ENCODE measurements at regions of chr1 and their contacts with region 1.

Region 1: GRCh38 chr1:7207875-7208646 is 422.8 kb downstream of the CAMTA1 start:
- DNase-seq: peak; percentile 65
- ATAC-seq: peak; percentile 100
- H3K4me3 ChIP-seq: no peak overlapping the region
- H3K27ac ChIP-seq: no peak overlapping the region
- H3K4me1 ChIP-seq: peaks cover 0 to 3% of the 10 kb centered on the region in 2 experiments; a peak in 1 of 4 replicates
- H3K27me3 ChIP-seq: no peaks in the 10 kb centered on the region
- CTCF ChIP-seq: peak; percentile 89 to 94 (median 92)
- POLR2A ChIP-seq: no peak
- RAD21 ChIP-seq: peak; percentile 93

Region 2: GRCh38 chr1:6701437-6702153 is 506.5 kb before region 1 on chr1 and contains the start of gene DNAJC11:
- CTCF ChIA-PET with region 1: interaction called, 3 read pairs
- POLR2A ChIA-PET with region 1: no interaction called
- RAD21 ChIA-PET with region 1: no interaction called
- intact Hi-C with region 1: loop called (anchors 5 kb)
- DNase-seq: peak; percentile 74
- ATAC-seq: peak; percentile 93
- H3K4me3 ChIP-seq: peak within 1 kb of the TSS; percentile 99 to 100
- H3K27ac ChIP-seq: peak within 1 kb of the TSS; percentile 77
- H3K4me1 ChIP-seq: peaks cover 5 to 20% of the 10 kb centered on the region in 2 experiments; a peak in 3 of 4 replicates
- H3K27me3 ChIP-seq: no peaks in the 10 kb centered on the region
- CTCF ChIP-seq: peak; percentile 62 to 78 (median 77)
- POLR2A ChIP-seq: peak; percentile 73
- RAD21 ChIP-seq: no peak
- total RNA-seq, gene DNAJC11: 75.6 TPM

Region 3: GRCh38 chr1:6962996-6963911 is 244.8 kb before region 1 on chr1:
- CTCF ChIA-PET with region 1: interaction called, 13 read pairs
- POLR2A ChIA-PET with region 1: no interaction called
- RAD21 ChIA-PET with region 1: no interaction called
- intact Hi-C with region 1: no loop called
- DNase-seq: peak; percentile 88
- ATAC-seq: peak; percentile 82
- H3K4me3 ChIP-seq: peak overlapping the region; percentile 21 to 25; a peak in 3 of 4 replicates
- H3K27ac ChIP-seq: peak overlapping the region; percentile 39; the same call in 1 of the 2 replicates
- H3K4me1 ChIP-seq: peaks cover 27 to 40% of the 10 kb centered on the region in 2 experiments
- H3K27me3 ChIP-seq: no peaks in the 10 kb centered on the region
- CTCF ChIP-seq: no peak
- POLR2A ChIP-seq: no peak
- RAD21 ChIP-seq: no peak; the same call in none of the 2 replicates

Region 4: DNA sequence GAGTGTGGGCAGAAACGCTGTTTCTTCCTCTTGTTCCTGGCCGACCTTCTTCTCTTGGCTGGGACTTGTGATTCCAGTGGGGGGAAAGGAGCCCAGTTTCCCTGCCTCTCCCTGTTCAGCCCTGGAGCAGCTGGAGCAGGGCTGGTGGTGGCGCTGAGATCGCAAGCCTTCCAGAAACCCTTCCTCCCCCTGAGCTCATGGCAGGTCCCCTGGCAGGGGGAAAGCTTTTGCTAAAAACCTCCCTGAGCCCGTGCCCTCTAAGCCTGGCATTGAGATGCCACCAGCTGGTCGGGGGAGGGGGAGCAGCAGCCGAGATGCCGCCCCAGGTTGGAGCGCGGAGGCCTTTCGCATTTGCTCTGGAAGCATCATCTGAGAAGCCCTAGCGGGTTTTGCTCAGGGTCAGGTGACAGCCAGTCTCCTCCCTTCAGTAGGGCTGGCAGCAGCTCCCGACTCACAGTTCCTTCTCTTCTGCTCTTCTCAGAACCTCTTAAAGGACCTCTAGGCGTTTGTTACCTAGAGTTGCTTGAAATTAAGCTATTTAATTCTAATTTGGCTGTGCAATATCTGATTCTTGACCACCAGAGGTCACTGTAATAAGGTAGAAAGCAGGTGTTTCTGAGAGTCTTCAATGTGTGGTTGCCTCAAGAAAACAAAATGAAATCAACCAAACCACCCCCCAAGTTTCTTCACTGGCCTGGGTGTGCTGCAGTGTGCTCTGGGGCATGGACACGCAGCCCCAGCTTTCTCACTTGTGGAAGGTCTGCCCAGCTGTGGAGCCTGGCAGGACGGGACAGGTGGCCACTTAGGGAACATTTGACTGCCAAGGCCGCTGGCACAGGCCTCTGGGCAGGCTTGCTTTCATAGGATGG is 165.5 kb before region 1 on chr1:
- CTCF ChIA-PET with region 1: interaction called, 76 read pairs
- POLR2A ChIA-PET with region 1: no interaction called
- RAD21 ChIA-PET with region 1: interaction called, 5 to 9 read pairs
- intact Hi-C with region 1: loop called (anchors 1 kb)
- DNase-seq: peak; percentile 10
- ATAC-seq: peak; percentile 87
- H3K4me3 ChIP-seq: no peak overlapping the region
- H3K27ac ChIP-seq: no peak overlapping the region
- H3K4me1 ChIP-seq: no peaks in the 10 kb centered on the region
- H3K27me3 ChIP-seq: peaks cover 11% of the 10 kb centered on the region
- CTCF ChIP-seq: peak; percentile 49 to 74 (median 69)
- POLR2A ChIP-seq: no peak
- RAD21 ChIP-seq: peak; percentile 75

Region 5: GRCh38 chr1:7218210-7218832 is 10.3 kb after region 1 on chr1:
- CTCF ChIA-PET with region 1: interaction called, 11 read pairs
- POLR2A ChIA-PET with region 1: no interaction called
- RAD21 ChIA-PET with region 1: no interaction called
- intact Hi-C with region 1: no loop called
- DNase-seq: peak; percentile 51
- ATAC-seq: peak; percentile 74
- H3K4me3 ChIP-seq: no peak overlapping the region
- H3K27ac ChIP-seq: no peak overlapping the region
- H3K4me1 ChIP-seq: peaks cover 3 to 7% of the 10 kb centered on the region in 2 experiments; a peak in 2 of 4 replicates
- H3K27me3 ChIP-seq: no peaks in the 10 kb centered on the region
- CTCF ChIP-seq: peak; percentile 83 to 95 (median 90)
- POLR2A ChIP-seq: no peak
- RAD21 ChIP-seq: peak; percentile 93